ENCODE measurements at regions of chr16 and their contacts with region 1.

Region 1: GRCh38 chr16:10314811-10315210 is 71.0 kb upstream of the ATF7IP2 start:
- DNase-seq: no peak
- H3K4me3 ChIP-seq: no peak overlapping the region
- H3K4me3 Mint-ChIP-seq: no peak overlapping the region
- H3K27ac Mint-ChIP-seq: no peak overlapping the region
- H3K4me1 ChIP-seq: peaks cover 40% of the 10 kb centered on the region
- H3K4me1 Mint-ChIP-seq: peaks cover 28% of the 10 kb centered on the region
- H3K27me3 ChIP-seq: no peaks in the 10 kb centered on the region
- H3K27me3 Mint-ChIP-seq: no peaks in the 10 kb centered on the region
- CTCF ChIP-seq: peak; percentile 8 to 10

Region 2: DNA sequence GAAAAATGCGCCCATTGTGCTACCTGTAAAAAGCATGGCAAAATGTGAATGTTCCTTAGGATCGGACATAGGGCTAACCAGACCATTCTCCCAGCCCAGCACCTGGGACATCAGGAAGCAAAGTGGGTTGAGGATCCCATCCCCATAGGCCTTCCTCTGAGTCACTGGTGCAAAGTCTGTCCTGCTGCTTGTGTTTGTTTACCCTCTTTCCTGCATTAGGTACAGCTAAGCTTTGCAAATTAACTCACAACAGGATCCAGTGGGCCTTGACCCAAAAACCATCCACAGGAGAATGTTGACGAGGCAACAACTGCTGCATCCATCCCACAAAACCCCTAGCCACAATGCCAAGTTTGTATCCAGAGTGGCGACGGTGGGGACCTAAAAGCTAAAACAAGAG is 238.8 kb before region 1 on chr16:
- CTCF ChIA-PET with region 1: no interaction called
- POLR2A ChIA-PET with region 1: interaction called, 10 read pairs
- intact Hi-C with region 1: no loop called
- DNase-seq: no peak
- H3K4me3 ChIP-seq: no peak overlapping the region
- H3K4me3 Mint-ChIP-seq: no peak overlapping the region
- H3K27ac Mint-ChIP-seq: no peak overlapping the region
- H3K4me1 ChIP-seq: peaks cover 23% of the 10 kb centered on the region
- H3K4me1 Mint-ChIP-seq: peaks cover 9% of the 10 kb centered on the region
- H3K27me3 ChIP-seq: no peaks in the 10 kb centered on the region
- H3K27me3 Mint-ChIP-seq: no peaks in the 10 kb centered on the region
- CTCF ChIP-seq: no peak

Region 3: DNA sequence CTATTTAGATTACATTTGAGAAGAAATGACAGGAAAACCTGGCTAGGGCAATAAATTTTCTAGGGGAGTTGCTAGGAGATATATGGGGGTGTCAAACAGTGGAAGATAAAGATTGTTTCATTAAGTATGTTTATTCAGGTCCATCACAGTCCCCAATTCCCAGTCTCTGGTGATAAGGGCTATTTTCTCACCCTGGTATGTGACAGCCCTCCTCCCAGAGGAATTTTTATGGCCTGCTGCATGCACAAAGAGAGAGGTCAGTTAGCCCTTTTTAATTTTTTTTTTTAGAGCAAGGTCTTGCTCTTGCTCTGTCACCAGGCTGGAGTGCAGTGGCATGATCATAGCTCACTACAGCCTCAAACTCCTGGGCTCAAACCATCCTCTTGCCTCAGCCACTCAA is 17.4 kb after region 1 on chr16:
- CTCF ChIA-PET with region 1: no interaction called
- POLR2A ChIA-PET with region 1: no interaction called
- intact Hi-C with region 1: loop called (anchors 2 kb)
- DNase-seq: peak; percentile 82 to 91
- H3K4me3 ChIP-seq: no peak overlapping the region
- H3K4me3 Mint-ChIP-seq: no peak overlapping the region
- H3K27ac Mint-ChIP-seq: peak overlapping the region; percentile 66
- H3K4me1 ChIP-seq: peaks cover 41% of the 10 kb centered on the region
- H3K4me1 Mint-ChIP-seq: no peaks in the 10 kb centered on the region
- H3K27me3 ChIP-seq: no peaks in the 10 kb centered on the region
- H3K27me3 Mint-ChIP-seq: no peaks in the 10 kb centered on the region
- CTCF ChIP-seq: no peak

Measured in Caco-2 (cell line).